ENCODE measurements at regions of chr7 and their contacts with region 1.

Region 1: GRCh38 chr7:137592232-137592896 is 248.8 kb upstream of the PTN start:
- DNase-seq: peak in 2 of 3 donors; percentile 40 to 72
- ATAC-seq: peak; percentile 92
- H3K4me3 ChIP-seq: no peak overlapping the region
- H3K4me1 ChIP-seq: peaks cover 5% of the 10 kb centered on the region
- CTCF ChIP-seq: peak; percentile 40

Region 2: GRCh38 chr7:137169282-137169698 is 423.1 kb before region 1 on chr7:
- intact Hi-C with region 1: loop called in 1 of 2 experiments (anchors 10 kb)
- DNase-seq: peak in 2 of 3 donors; percentile 37 to 59
- ATAC-seq: peak; percentile 67
- H3K4me3 ChIP-seq: no peak overlapping the region
- H3K4me1 ChIP-seq: no peaks in the 10 kb centered on the region
- CTCF ChIP-seq: no peak

Region 3: GRCh38 chr7:137768366-137768765 is 176.0 kb after region 1 on chr7:
- intact Hi-C with region 1: no loop called
- DNase-seq: no peak
- ATAC-seq: no peak
- H3K4me3 ChIP-seq: no peak overlapping the region
- H3K4me1 ChIP-seq: no peaks in the 10 kb centered on the region
- CTCF ChIP-seq: no peak